Ascending aorta (tissue), 2 donors: ENCODE measurements at regions of chr10 and their contacts with region 1.

Region 1: DNA sequence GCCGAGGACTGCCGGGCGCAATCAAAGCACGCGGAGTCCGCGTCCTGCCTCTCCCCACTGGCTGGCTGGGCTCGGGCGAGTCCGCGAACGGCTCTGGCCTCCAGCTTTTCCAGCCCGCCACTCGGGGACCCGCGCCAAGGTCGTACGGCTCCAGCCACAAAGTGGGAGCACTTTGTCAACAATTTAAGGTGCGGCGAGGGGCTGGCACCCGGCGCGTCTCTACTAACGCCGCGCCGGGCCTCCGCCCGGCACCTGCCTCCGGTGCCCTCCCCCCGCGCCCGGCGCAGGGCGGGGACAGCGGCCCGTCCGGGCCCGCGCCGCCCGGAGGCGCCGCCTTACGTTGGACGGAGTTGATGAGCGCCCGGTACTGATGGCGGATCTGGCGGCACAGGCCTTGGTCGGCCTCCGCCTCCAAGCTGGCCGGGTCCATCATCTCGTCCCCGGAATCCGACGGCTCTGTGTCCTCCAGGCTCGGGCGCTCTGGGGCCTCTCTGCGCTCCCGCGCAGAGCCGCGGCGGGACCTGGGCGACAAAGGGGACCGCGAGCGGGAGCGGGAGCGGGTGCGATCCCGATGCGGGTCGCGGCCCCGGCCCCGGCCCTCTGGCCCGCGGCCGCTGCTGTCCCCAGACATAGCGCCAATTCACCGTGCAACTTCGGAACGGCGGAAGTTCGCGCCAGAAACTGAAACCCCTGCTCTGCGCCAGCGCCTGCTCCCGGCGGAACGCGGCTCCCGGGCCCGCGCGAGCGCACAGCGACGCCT is at the start of gene NSMCE4A:
- DNase-seq: peak in 1 of 2 donors; percentile 81
- H3K4me3 ChIP-seq: peak within 1 kb of the TSS; percentile 80 to 95
- H3K27ac ChIP-seq: peak within 1 kb of the TSS; percentile 93 to 96
- H3K4me1 ChIP-seq: peaks cover 0 to 16% of the 10 kb centered on the region in 2 donors
- H3K27me3 ChIP-seq: no peaks in the 10 kb centered on the region
- CTCF ChIP-seq: peak in 2 of 3 experiments; percentile 50 to 52
- total RNA-seq, gene NSMCE4A: 63.3 TPM

Region 2: GRCh38 chr10:121994390-121994961 is 19.8 kb after region 1 on chr10:
- intact Hi-C with region 1: loop called (anchors 1 kb)
- DNase-seq: peak in 1 of 2 donors; percentile 80
- H3K4me3 ChIP-seq: peak overlapping the region in 1 of 2 donors; percentile 55
- H3K27ac ChIP-seq: peak overlapping the region; percentile 83 to 90
- H3K4me1 ChIP-seq: peaks cover 4 to 30% of the 10 kb centered on the region in 2 donors
- H3K27me3 ChIP-seq: no peaks in the 10 kb centered on the region
- CTCF ChIP-seq: peak in 1 of 3 experiments; percentile 24

Region 3: DNA sequence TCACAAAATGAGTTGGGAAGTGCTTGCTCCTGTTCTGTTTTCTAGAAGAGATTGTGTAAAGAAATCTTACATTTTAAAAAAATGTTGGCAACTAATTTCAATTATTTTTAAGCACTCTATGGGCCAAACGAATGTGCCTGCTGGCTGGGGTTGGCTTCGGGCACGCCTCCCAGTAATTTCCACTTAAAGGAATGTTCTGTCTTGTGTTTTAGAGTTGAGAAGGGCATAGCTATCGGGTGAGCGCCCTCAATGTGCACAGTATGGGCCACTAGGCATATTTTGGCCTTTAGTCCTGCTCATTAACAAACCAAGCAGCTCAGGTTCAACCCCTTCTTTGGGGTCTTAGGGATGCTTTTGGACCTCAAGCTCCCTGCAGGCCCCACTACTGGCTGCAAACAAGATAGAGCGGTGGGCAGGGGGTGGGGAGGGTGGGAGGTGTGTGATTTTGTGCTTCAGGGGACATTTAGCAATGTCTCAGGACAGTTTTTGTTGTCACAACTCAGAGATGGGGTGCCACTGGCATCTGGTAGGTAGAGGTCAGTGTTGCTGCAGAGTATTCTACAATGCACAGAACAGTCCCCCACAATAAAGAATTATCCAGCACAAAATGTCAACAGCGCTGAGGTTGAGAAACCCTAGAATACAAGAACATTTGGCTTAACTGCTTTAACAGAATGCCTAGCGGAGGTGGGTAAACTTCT is 54.9 kb after region 1 on chr10:
- intact Hi-C with region 1: loop called (anchors 1 kb)
- DNase-seq: peak in 1 of 2 donors; percentile 83
- H3K4me3 ChIP-seq: peak overlapping the region in 1 of 2 donors; percentile 33
- H3K27ac ChIP-seq: peak overlapping the region; percentile 66 to 74
- H3K4me1 ChIP-seq: peaks cover 0 to 14% of the 10 kb centered on the region in 2 donors
- H3K27me3 ChIP-seq: no peaks in the 10 kb centered on the region
- CTCF ChIP-seq: peak in 1 of 3 experiments; percentile 7

Region 4: DNA sequence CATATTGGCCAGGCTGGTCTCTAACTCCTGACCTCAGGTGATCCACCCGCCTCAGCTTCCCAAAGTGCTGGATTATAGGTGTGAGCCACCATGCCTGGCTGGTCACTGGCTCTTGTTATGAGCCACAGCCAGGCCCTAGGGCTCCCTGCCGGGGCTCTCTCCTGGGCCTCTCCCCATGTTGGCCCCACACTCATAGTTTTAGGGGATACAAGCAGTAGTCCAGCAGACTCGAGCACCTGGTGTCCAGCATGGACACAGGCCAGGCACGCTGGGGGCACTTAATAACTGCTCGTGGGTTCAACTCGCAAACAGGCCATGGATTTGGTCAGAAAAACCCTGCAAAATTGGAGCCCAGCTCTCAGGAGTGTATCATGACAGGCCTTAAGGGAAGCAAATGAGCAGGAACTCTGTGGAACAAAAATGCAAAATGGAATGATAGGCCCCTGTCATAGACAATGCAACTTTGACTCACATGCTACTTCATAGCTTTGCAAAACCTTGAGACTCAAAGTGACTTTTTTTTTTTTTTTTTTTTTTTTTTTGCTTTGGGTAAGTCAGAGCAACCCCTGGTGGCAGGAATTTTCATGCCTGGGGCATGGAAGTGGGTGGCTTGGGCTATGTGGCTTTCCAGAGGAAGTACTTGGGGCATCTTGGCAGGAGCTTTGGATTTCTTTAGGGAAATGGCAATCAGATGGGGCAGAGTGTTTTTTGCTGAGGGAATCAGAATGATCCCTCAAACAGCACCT is 76.7 kb after region 1 on chr10:
- intact Hi-C with region 1: loop called (anchors 1 kb)
- DNase-seq: peak in 1 of 2 donors; percentile 84
- H3K4me3 ChIP-seq: no peak overlapping the region
- H3K27ac ChIP-seq: peak overlapping the region; percentile 24 to 70
- H3K4me1 ChIP-seq: peaks cover 3 to 4% of the 10 kb centered on the region in 2 donors
- H3K27me3 ChIP-seq: no peaks in the 10 kb centered on the region
- CTCF ChIP-seq: peak; percentile 15 to 67 (median 67)

Region 5: GRCh38 chr10:122213766-122214165 is 239.1 kb after region 1 on chr10:
- intact Hi-C with region 1: loop called (anchors 10 kb)
- DNase-seq: no peak
- H3K4me3 ChIP-seq: no peak overlapping the region
- H3K27ac ChIP-seq: no peak overlapping the region
- H3K4me1 ChIP-seq: no peaks in the 10 kb centered on the region
- H3K27me3 ChIP-seq: no peaks in the 10 kb centered on the region
- CTCF ChIP-seq: peak in 1 of 3 experiments; percentile 6